ENCODE measurements at regions of chr2 and their contacts with region 1.

Region 1: GRCh38 chr2:163345908-163346573 is 389.8 kb downstream of the FIGN start:
- DNase-seq: no peak
- H3K4me3 ChIP-seq: no peak overlapping the region
- H3K27ac ChIP-seq: no peak overlapping the region
- H3K4me1 ChIP-seq: peaks cover 3 to 21% of the 10 kb centered on the region in 2 donors
- H3K27me3 ChIP-seq: no peaks in the 10 kb centered on the region
- CTCF ChIP-seq: peak; percentile 53 to 88 (median 84)

Region 2: GRCh38 chr2:163735685-163736432 is 389.8 kb after region 1 on chr2 and contains the start of gene FIGN:
- intact Hi-C with region 1: loop called (anchors 2 kb)
- DNase-seq: peak; percentile 22 to 89
- H3K4me3 ChIP-seq: peak within 1 kb of the TSS; percentile 77 to 96
- H3K27ac ChIP-seq: peak within 1 kb of the TSS; percentile 96 to 99
- H3K4me1 ChIP-seq: peaks cover 0 to 2% of the 10 kb centered on the region in 2 donors
- H3K27me3 ChIP-seq: no peaks in the 10 kb centered on the region
- CTCF ChIP-seq: no peak
- total RNA-seq, gene FIGN: 4.3 TPM

Region 3: DNA sequence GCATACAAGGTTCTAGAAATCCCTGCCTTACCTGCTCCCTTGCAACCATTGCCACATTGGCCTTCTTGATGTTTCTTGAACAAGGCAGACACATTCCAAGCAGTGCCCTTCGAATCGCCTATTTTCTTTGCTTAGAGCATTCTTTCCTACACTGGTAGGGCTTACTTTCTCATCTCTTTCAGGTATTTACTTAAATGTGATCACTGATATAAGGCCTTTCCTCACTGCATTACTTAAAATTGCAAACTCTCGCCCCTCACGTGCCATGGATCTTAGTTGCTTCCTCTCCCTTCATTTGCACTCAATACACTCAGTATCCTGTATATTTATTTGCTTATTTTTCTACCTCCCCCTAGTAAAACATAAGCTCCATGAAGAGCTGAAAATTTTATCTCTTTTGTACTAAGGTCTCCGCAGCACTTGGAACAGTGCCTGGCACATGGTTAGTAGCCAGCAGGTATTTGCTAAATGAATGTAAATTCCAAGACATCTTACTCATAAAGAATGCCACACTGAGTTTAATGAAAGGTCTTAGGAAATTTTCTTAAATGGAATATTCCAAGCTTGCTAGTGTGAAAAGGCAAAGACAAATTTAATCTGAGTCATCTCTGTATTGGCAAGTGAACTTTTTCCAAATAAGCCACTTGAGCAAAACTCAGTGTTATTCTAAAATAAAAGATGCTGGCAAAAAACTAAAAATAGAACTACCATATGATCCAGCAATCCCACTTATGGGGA is 432.2 kb after region 1 on chr2:
- intact Hi-C with region 1: loop called (anchors 5 kb)
- DNase-seq: peak in 1 of 2 donors; percentile 67
- H3K4me3 ChIP-seq: no peak overlapping the region
- H3K27ac ChIP-seq: no peak overlapping the region
- H3K4me1 ChIP-seq: peaks cover 0 to 10% of the 10 kb centered on the region in 2 donors
- H3K27me3 ChIP-seq: no peaks in the 10 kb centered on the region
- CTCF ChIP-seq: no peak

Region 4: GRCh38 chr2:163919719-163920118 is 573.7 kb after region 1 on chr2:
- intact Hi-C with region 1: loop called (anchors 10 kb)
- DNase-seq: no peak
- H3K4me3 ChIP-seq: no peak overlapping the region
- H3K27ac ChIP-seq: no peak overlapping the region
- H3K4me1 ChIP-seq: peaks cover 0 to 4% of the 10 kb centered on the region in 2 donors
- H3K27me3 ChIP-seq: no peaks in the 10 kb centered on the region
- CTCF ChIP-seq: no peak

Region 5: GRCh38 chr2:164055623-164056022 is 709.6 kb after region 1 on chr2:
- intact Hi-C with region 1: loop called (anchors 5 kb)
- DNase-seq: no peak
- H3K4me3 ChIP-seq: no peak overlapping the region
- H3K27ac ChIP-seq: peak overlapping the region in 1 of 2 donors; percentile 31
- H3K4me1 ChIP-seq: peaks cover 6 to 15% of the 10 kb centered on the region in 2 donors
- H3K27me3 ChIP-seq: no peaks in the 10 kb centered on the region
- CTCF ChIP-seq: no peak

Region 6: GRCh38 chr2:164126960-164127637 is 781.1 kb after region 1 on chr2:
- intact Hi-C with region 1: loop called (anchors 2 kb)
- DNase-seq: no peak
- H3K4me3 ChIP-seq: no peak overlapping the region
- H3K27ac ChIP-seq: no peak overlapping the region
- H3K4me1 ChIP-seq: no peaks in the 10 kb centered on the region
- H3K27me3 ChIP-seq: no peaks in the 10 kb centered on the region
- CTCF ChIP-seq: peak in 2 of 3 experiments; percentile 32 to 60

Region 7: GRCh38 chr2:164430166-164430783 is 1084.2 kb after region 1 on chr2:
- intact Hi-C with region 1: loop called (anchors 2 kb)
- DNase-seq: no peak
- H3K4me3 ChIP-seq: no peak overlapping the region
- H3K27ac ChIP-seq: no peak overlapping the region
- H3K4me1 ChIP-seq: no peaks in the 10 kb centered on the region
- H3K27me3 ChIP-seq: no peaks in the 10 kb centered on the region
- CTCF ChIP-seq: peak in 2 of 3 experiments; percentile 54 to 68

Measured in ascending aorta (tissue), 2 donors.